ENCODE measurements at regions of chr14 and their contacts with region 1.

Region 1: DNA sequence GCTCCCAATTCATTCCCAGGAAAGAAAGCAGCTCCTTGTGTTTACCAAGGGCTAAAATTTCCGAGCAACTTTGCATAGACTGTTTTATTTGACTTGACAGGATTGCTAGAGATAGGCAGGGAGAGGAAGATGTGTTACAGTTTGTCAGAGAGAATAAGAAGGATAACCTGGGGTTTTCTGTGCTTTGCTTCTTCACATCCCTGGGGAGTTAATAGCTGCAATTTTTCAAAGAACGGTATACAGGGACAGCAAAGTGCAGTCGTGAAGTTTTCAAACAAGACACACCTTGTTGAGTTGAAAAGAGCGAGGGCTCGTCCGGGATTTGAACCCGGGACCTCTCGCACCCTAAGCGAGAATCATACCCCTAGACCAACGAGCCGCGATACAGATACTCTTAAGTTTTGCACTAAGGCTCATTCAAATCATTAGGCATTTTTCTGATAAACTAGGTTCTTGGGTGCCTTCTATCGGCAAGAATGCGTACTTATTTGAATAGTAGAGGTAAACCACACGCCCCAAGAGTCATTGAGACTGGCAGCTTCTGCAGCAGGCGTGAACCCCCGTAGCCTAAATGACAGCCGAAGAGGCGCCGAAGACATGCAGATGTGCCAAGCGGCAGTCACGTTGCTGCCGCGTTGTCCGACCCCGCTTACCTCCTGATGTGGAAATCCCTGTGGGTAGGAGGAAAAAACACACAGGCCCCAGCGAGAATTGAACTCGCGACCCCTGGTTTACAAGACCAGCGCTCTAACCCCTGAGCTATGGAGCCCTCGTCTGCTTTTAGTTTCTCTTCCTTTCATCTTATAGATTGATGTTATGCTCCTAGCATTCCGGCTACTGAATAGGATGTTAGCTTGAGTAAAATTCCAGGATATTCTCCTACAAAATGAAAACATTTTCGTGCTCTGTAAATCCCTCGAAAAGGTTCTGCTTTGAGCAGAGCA is 22.2 kb upstream of the RNASE12 start:
- DNase-seq: peak; percentile 62 to 76
- ATAC-seq: peak; percentile 79 to 82
- H3K4me3 ChIP-seq: peak overlapping the region; percentile 56 to 66 (median 58)
- H3K27ac ChIP-seq: peak overlapping the region; percentile 44 to 73 (median 68)
- H3K4me1 ChIP-seq: peaks cover 9 to 17% of the 10 kb centered on the region in 2 donors
- H3K27me3 ChIP-seq: no peaks in the 10 kb centered on the region
- CTCF ChIP-seq: peak; percentile 72 to 93 (median 83)
- POLR2A ChIP-seq: no peak

Region 2: GRCh38 chr14:20327005-20327869 is 286.1 kb before region 1 on chr14:
- in situ Hi-C with region 1: loop called (anchors 5 to 10 kb)
- intact Hi-C with region 1: loop called (anchors 1 kb)
- DNase-seq: no peak
- ATAC-seq: peak; percentile 60 to 70
- H3K4me3 ChIP-seq: no peak overlapping the region
- H3K27ac ChIP-seq: peak overlapping the region in 3 of 4 donors; percentile 9 to 57 (median 9)
- H3K4me1 ChIP-seq: peaks cover 10 to 13% of the 10 kb centered on the region in 2 donors
- H3K27me3 ChIP-seq: no peaks in the 10 kb centered on the region
- CTCF ChIP-seq: peak; percentile 57 to 84 (median 78)
- POLR2A ChIP-seq: no peak

Region 3: GRCh38 chr14:20413045-20413799 is 200.1 kb before region 1 on chr14 and contains the start of gene TEP1:
- in situ Hi-C with region 1: loop called (anchors 5 to 25 kb)
- intact Hi-C with region 1: loop called (anchors 2 kb)
- DNase-seq: peak; percentile 83 to 88
- ATAC-seq: peak; percentile 89 to 93
- H3K4me3 ChIP-seq: peak within 1 kb of the TSS; percentile 79 to 91 (median 85)
- H3K27ac ChIP-seq: peak within 1 kb of the TSS; percentile 94 to 97 (median 96)
- H3K4me1 ChIP-seq: peaks cover 25 to 32% of the 10 kb centered on the region in 2 donors
- H3K27me3 ChIP-seq: no peaks in the 10 kb centered on the region
- CTCF ChIP-seq: no peak
- POLR2A ChIP-seq: peak; percentile 75 to 83
- total RNA-seq, gene TEP1: 7.2 to 25.7 (median 12.0) TPM

Region 4: DNA sequence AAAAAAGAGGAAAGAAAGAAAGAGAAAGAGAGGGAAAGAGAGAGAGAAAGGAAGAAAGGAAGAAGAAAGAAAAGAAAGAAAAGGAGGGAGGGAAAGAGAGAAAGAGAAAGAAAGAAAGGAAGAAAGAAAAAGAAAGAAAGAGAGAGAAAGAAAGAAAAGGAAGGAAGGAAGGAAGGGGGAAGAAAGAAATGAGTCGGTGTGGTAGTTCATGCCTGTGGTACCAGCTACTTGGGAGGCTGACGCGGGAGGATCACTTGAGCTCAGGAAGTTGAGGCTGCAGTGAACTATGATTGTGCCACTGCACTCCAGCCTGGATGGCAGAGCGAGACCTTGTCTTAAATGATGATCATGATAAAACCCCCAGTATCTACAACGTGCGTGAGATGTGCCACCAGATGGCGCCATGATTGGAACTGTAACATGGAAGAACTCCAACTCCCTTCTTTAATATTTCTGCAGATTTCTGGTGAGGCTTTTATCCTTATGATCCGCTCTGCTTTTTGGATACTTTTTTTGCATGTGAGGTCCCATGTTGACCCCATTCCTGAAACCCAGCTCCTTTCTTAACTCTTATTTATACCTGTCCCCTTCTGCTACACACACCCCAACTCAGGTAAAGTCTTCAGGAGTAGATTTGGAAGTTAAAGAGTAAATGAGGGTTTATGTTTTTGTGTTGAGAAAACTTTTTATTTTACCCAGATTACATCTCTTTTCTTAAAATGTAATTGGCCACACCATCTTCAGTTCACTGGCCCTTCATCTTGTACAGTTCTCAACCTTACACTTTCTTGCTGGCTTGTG is 82.4 kb before region 1 on chr14:
- in situ Hi-C with region 1: no loop called
- intact Hi-C with region 1: loop called (anchors 1 kb)
- DNase-seq: peak; percentile 33 to 47
- ATAC-seq: peak; percentile 50 to 58
- H3K4me3 ChIP-seq: no peak overlapping the region
- H3K27ac ChIP-seq: no peak overlapping the region
- H3K4me1 ChIP-seq: no peaks in the 10 kb centered on the region
- H3K27me3 ChIP-seq: peaks cover 0 to 2% (median 0%) of the 10 kb centered on the region in 3 donors
- CTCF ChIP-seq: peak; percentile 24 to 68 (median 40)
- POLR2A ChIP-seq: no peak

Region 5: GRCh38 chr14:20904393-20905029 is 291.1 kb after region 1 on chr14:
- in situ Hi-C with region 1: no loop called
- intact Hi-C with region 1: no loop called
- DNase-seq: peak in 1 of 2 donors; percentile 10
- ATAC-seq: no peak
- H3K4me3 ChIP-seq: no peak overlapping the region
- H3K27ac ChIP-seq: no peak overlapping the region
- H3K4me1 ChIP-seq: no peaks in the 10 kb centered on the region
- H3K27me3 ChIP-seq: peaks cover 0 to 1% (median 0%) of the 10 kb centered on the region in 3 donors
- CTCF ChIP-seq: no peak
- POLR2A ChIP-seq: no peak

Region 6: GRCh38 chr14:21039585-21040369 is 426.4 kb after region 1 on chr14:
- in situ Hi-C with region 1: no loop called
- intact Hi-C with region 1: loop called (anchors 10 kb)
- DNase-seq: peak in 1 of 2 donors; percentile 72
- ATAC-seq: peak; percentile 53 to 68
- H3K4me3 ChIP-seq: peak overlapping the region in 2 of 4 donors; percentile 19 to 26
- H3K27ac ChIP-seq: peak overlapping the region; percentile 83 to 91 (median 86)
- H3K4me1 ChIP-seq: peaks cover 62 to 75% of the 10 kb centered on the region in 2 donors
- H3K27me3 ChIP-seq: no peaks in the 10 kb centered on the region
- CTCF ChIP-seq: peak; percentile 77 to 84 (median 79)
- POLR2A ChIP-seq: peak in 1 of 2 donors; percentile 1

Measured in gastrocnemius medialis (tissue), 4 donors.